MCF 10A (cell line): ENCODE measurements at regions of chr20 and their contacts with region 1.

Region 1: DNA sequence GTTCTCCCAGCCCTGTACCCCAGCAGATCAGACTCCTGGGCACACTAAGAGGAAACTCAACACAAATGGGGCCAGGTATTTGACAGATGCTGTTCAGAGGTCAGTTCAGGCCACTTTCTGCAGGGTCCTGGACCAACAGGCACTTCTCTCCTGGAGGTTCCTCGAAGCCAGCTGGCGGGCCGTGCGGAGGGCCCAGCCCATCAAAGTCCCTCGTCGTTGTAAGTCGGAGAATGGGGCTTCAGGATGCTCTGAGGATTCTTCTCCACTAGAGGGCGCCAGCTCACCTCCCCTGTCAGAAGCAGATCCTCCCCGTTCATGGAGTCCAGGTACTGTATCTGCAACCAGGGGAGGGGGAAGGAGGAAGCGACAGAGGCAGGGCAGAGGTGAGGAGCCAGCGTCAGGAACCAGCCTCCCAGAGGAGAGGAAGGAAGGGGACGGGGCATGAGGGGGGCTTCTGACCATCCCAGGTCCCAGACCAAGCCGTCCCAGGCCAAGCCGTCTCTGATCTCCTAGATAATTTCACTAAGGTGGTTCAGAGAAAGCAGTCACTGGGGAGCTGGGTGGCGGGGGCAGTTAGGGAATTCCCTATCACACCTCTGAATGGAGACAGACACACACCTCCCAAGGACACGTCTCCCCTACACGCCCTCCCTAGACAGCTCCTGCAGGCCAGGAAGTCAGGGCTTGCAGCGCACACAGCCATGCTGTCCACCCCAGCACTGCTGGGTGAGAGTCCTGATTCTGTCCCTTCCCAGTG is 11.7 kb upstream of the FAM83C start:
- DNase-seq: peak; percentile 92
- H3K4me3 Mint-ChIP-seq: no peak overlapping the region
- H3K27ac Mint-ChIP-seq: peak overlapping the region; percentile 94
- H3K4me1 Mint-ChIP-seq: peaks cover 63% of the 10 kb centered on the region
- H3K27me3 Mint-ChIP-seq: no peaks in the 10 kb centered on the region
- CTCF ChIP-seq: peak; percentile 92

Region 2: GRCh38 chr20:35238170-35238569 is 65.7 kb before region 1 on chr20:
- CTCF ChIA-PET with region 1: no interaction called
- POLR2A ChIA-PET with region 1: no interaction called
- intact Hi-C with region 1: no loop called
- DNase-seq: no peak
- H3K4me3 Mint-ChIP-seq: no peak overlapping the region
- H3K27ac Mint-ChIP-seq: no peak overlapping the region
- H3K4me1 Mint-ChIP-seq: no peaks in the 10 kb centered on the region
- H3K27me3 Mint-ChIP-seq: peaks cover 56% of the 10 kb centered on the region
- CTCF ChIP-seq: no peak

Region 3: DNA sequence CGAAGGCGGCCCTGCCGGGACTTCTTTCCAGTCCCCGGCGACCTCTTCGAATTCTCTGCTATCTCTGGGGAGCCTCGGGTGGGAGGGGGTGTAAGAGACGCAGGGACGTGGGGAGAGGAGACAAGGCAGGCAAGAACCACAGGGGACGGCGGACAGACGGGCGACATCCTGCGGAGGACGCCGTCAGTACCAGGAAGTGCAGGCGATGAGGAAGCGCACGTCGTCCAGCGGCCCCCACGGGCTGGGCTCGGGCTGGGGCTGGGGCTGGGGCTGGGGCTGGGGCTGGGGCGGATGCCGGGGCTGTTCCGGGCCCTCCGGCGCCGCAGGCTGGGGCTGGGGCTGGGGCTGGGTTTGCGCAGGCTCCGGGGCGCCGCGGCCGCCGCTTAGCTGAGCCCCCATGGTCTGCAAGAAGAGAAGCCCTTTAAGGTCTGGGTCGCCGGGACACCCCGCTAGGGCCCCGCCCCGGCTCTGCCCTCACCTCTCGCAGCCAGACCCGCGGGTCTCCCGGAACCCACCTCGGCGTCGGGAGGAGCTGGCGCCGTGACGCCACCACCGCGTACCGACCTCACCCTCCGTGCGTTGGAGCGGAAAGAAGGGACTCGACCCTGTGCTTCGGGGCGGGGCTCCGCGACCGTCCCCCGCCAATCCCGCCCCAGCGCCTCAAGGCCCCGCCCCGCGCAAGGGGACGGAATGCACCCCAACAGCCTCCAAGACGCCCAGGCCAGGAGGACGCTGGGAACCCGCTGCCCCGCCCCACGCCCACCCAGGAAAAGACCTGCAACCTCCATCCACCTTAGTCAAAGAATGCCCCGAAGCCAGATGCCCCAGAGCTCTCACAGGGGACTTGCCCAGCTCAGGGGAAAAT is 26.1 kb before region 1 on chr20 and contains the start of gene MMP24OS:
- CTCF ChIA-PET with region 1: interaction called, 55 read pairs
- POLR2A ChIA-PET with region 1: interaction called, 121 read pairs
- intact Hi-C with region 1: no loop called
- DNase-seq: peak; percentile 86
- H3K4me3 Mint-ChIP-seq: peak within 1 kb of the TSS; percentile 98
- H3K27ac Mint-ChIP-seq: peak within 1 kb of the TSS; percentile 87
- H3K4me1 Mint-ChIP-seq: peaks cover 26% of the 10 kb centered on the region
- H3K27me3 Mint-ChIP-seq: no peaks in the 10 kb centered on the region
- CTCF ChIP-seq: no peak
- total RNA-seq, gene MMP24OS: 43.2 and 52.2 TPM in 2 replicates

Region 4: DNA sequence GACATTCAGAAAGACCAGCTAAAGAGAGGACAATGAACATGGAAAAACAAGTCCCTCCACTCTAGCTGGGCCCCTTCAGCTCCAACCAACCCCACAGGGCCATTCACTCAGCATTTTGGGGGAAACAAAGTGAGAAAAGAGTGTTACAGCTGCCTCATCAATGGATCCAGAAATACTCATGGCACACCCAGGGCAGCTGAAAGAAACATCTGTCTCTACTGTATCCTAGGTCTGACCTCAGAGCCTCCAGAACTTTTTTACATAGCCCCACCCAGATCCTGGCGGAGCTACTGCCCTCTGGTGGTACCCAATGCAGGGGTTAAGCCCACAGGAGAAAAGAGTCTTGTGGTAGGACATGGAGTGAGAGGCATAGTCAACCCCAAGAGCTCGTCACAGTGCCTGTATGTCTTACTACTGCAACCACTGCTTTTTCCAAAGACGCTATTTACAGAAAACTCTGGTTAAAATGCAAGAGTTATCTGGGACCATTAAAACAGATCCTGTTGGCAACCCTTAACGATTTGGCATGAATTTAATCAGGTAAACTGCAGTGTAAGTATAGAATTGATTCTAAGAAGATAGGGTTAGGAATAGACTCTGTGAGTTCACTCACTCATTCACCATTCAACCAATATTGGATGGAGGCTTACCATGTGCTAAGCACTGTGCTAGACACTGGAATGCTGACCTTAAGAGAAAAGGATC is 25.7 kb after region 1 on chr20:
- CTCF ChIA-PET with region 1: interaction called, 163 read pairs
- POLR2A ChIA-PET with region 1: interaction called, 468 read pairs
- intact Hi-C with region 1: loop called (anchors 1 kb)
- DNase-seq: peak; percentile 82
- H3K4me3 Mint-ChIP-seq: no peak overlapping the region
- H3K27ac Mint-ChIP-seq: peak overlapping the region; percentile 58
- H3K4me1 Mint-ChIP-seq: peaks cover 34% of the 10 kb centered on the region
- H3K27me3 Mint-ChIP-seq: no peaks in the 10 kb centered on the region
- CTCF ChIP-seq: peak; percentile 56

Region 5: GRCh38 chr20:35353646-35354045 is 49.7 kb after region 1 on chr20:
- CTCF ChIA-PET with region 1: interaction called, 18 read pairs
- POLR2A ChIA-PET with region 1: interaction called, 47 read pairs
- intact Hi-C with region 1: no loop called
- DNase-seq: no peak
- H3K4me3 Mint-ChIP-seq: no peak overlapping the region
- H3K27ac Mint-ChIP-seq: no peak overlapping the region
- H3K4me1 Mint-ChIP-seq: peaks cover 8% of the 10 kb centered on the region
- H3K27me3 Mint-ChIP-seq: no peaks in the 10 kb centered on the region
- CTCF ChIP-seq: no peak

Region 6: DNA sequence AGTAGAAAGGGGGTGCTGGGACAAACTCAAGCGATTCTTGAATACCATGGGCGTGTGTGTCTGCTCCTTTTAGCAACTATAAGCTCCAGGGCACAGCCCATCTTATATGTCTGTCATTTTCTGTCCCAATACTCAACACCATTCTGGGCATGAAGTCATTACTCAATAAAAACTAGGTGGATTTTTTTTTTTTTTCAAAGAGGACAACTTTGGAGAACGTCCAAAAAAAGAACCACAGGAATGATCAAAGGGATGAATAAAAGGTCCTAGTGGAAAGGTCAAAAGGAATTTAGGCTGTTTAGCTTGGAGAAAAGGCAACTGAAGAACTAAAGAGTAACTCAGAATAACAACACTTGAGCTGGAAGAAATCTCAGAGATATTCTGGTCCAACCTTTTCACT is 83.4 kb after region 1 on chr20:
- CTCF ChIA-PET with region 1: interaction called, 14 read pairs
- POLR2A ChIA-PET with region 1: interaction called, 6 read pairs
- intact Hi-C with region 1: no loop called
- DNase-seq: peak; percentile 83
- H3K4me3 Mint-ChIP-seq: no peak overlapping the region
- H3K27ac Mint-ChIP-seq: no peak overlapping the region
- H3K4me1 Mint-ChIP-seq: peaks cover 13% of the 10 kb centered on the region
- H3K27me3 Mint-ChIP-seq: no peaks in the 10 kb centered on the region
- CTCF ChIP-seq: no peak

Region 7: DNA sequence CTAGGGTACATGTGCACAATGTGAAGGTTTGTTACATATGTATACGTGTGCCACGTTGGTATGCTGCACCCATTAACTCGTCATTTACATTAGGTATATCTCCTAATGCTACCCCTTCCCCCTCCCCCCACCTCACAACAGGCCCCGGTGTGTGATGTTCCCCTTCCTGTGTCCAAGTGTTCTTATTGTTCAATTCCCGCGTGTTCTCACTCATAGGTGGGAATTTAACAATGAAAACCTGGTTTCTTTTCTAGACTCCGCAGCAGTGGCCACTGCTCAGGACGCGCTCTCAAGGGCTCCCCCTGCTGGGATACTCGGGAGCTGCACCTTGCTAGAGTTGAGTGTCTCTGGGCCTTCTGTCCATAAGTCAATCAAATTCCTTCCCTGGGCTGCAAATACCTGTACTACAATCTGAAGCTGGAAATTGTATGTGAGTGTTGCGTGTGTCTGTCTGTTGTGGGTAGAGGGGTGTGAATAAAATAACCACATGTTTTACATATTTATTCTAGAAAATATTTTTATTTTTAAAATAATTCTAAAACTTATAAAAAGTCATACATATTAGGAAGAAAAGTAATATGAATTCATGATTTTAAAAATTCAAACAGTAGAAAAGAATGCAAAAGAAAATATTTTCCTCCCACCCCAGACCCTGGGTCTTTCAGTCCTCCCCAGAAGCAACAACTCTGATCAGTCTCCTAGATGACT is 143.3 kb after region 1 on chr20:
- CTCF ChIA-PET with region 1: interaction called, 374 read pairs
- POLR2A ChIA-PET with region 1: interaction called, 253 read pairs
- intact Hi-C with region 1: loop called (anchors 1 kb)
- DNase-seq: peak; percentile 86
- H3K4me3 Mint-ChIP-seq: peak overlapping the region; percentile 57
- H3K27ac Mint-ChIP-seq: peak overlapping the region; percentile 63
- H3K4me1 Mint-ChIP-seq: peaks cover 11% of the 10 kb centered on the region
- H3K27me3 Mint-ChIP-seq: no peaks in the 10 kb centered on the region
- CTCF ChIP-seq: peak; percentile 96

Region 8: GRCh38 chr20:35561671-35562070 is 257.8 kb after region 1 on chr20:
- CTCF ChIA-PET with region 1: no interaction called
- POLR2A ChIA-PET with region 1: no interaction called
- intact Hi-C with region 1: no loop called
- DNase-seq: no peak
- H3K4me3 Mint-ChIP-seq: no peak overlapping the region
- H3K27ac Mint-ChIP-seq: no peak overlapping the region
- H3K4me1 Mint-ChIP-seq: no peaks in the 10 kb centered on the region
- H3K27me3 Mint-ChIP-seq: no peaks in the 10 kb centered on the region
- CTCF ChIP-seq: no peak

Region 9: DNA sequence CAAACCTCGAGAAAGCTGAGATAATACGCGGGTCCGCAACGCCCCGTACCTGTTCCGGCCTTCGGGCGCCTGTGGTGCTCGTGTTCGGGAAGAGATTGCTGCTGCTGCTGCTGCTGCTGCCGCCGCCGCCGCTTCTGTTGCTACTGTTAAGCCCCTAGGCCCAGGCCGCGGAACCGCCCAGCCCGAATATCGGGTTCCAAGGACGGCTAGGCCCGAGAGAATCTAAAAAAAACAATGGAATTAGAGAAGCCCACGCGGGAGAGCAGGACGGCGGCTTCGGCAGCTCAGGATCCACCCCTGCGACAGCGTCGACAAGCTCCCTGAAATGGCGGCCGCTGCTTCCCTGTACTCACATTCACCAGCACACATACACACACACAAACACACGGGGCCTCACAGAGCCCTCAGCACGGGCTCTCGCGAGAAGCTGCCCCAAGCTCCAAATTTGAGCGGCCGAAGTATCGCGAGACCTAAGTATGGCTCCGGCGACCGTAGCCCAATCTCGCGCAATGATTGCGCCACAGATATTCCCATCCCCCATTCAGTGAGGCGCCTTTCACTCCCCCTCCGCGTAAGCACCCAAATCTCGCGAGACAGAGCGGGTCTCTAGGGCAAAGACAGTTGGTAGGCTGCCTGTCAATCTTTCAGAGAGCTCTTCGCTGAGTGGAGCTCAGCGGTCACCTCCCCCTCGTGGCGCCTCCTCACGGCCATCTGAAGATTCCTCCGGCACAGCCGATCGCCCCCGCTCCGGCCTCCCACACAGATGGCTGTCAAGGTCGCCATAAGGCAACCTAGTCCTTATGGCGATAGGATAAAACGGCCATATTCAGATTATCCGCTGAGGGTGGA is 438.2 kb after region 1 on chr20 and contains the start of gene RBM39:
- CTCF ChIA-PET with region 1: no interaction called
- POLR2A ChIA-PET with region 1: interaction called, 12 read pairs
- intact Hi-C with region 1: no loop called
- DNase-seq: peak; percentile 100
- H3K4me3 Mint-ChIP-seq: peak within 1 kb of the TSS; percentile 97
- H3K27ac Mint-ChIP-seq: peak within 1 kb of the TSS; percentile 98
- H3K4me1 Mint-ChIP-seq: peaks cover 23% of the 10 kb centered on the region
- H3K27me3 Mint-ChIP-seq: no peaks in the 10 kb centered on the region
- CTCF ChIP-seq: peak; percentile 14
- total RNA-seq, gene RBM39: 380 and 438 TPM in 2 replicates